HEK293 (cell line): ENCODE measurements at regions of chr12 and their contacts with region 1.

Region 1: DNA sequence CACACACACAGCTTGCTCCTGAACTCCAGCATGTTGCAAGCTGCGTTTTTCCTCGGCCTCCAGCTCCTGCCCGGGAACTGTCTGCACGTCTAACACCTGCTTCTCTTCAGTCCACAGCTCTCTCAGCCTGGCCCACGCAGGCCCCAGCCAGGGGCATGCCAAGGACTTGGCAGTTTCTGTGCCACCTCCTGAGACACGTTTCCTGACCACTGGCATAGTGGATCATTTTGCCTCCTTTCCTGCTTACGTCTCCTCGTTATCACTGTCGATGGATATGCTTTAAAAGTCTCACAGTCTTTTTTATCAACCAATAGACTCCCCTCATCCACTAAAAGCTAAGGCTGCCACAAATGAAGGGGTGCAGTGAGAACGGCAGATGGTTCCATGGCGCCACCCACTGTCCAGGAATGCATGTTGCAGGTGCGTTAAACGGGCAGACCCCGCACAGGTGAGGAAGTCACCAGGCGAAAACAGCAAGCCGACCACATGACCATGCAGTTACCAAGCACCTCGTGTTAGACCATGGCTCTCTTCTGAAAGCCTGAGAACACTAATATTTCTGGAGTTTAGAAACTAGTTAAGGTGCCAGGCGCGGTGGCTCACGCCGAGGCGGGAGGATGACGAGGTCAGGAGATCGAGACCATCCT is 14.7 kb upstream of the TEAD4 start:
- H3K4me3 ChIP-seq: no peak overlapping the region
- H3K27ac ChIP-seq: no peak overlapping the region
- H3K4me1 ChIP-seq: no peaks in the 10 kb centered on the region
- CTCF ChIP-seq: peak; percentile 67; the same call in 1 of the 2 replicates

Region 2: DNA sequence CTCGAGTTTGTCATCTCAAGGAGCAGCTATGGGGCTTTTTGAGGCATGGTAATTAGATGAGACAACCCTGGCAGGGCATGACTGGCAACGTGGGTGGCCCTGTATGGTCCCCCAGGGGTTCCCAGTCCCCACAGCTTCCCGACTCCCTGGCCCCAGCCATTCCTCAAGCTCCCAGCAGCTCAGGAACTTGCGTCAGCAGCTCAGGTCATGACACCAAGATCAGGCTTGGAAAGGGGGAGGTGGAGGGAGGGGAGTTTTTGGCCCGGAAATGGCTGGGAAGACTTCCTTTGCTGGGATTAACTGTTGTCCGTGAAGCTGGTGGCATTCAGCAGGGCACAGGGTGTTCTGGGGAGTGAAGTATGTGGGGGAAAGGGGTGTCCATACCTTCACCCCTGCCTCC is 99.2 kb before region 1 on chr12:
- CTCF ChIA-PET with region 1: interaction called, 15 read pairs
- POLR2A ChIA-PET with region 1: no interaction called
- H3K4me3 ChIP-seq: no peak overlapping the region
- H3K27ac ChIP-seq: no peak overlapping the region
- H3K4me1 ChIP-seq: no peaks in the 10 kb centered on the region
- CTCF ChIP-seq: no peak

Region 3: DNA sequence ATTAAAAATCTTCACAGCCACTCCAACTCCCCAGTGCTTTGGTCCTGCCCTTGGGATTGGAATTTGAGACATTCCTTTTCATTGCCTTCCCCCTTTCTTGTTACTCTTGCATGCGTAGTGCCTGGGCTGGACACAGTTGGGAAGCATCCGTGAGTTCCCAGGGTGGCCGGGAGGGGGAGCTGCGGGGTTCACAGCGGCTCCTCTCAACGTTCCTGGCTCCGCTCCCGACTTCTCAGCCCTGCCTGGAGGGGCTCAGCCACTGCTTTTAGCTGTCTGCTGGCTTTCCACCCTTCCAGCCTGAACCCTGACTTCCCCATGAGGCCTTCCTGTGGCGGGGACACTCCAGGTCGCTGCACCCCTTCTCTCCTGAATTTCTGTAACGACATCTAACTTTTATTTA is 90.9 kb before region 1 on chr12:
- CTCF ChIA-PET with region 1: interaction called, 20 read pairs
- POLR2A ChIA-PET with region 1: no interaction called
- H3K4me3 ChIP-seq: no peak overlapping the region
- H3K27ac ChIP-seq: no peak overlapping the region
- H3K4me1 ChIP-seq: no peaks in the 10 kb centered on the region
- CTCF ChIP-seq: peak; percentile 83

Region 4: DNA sequence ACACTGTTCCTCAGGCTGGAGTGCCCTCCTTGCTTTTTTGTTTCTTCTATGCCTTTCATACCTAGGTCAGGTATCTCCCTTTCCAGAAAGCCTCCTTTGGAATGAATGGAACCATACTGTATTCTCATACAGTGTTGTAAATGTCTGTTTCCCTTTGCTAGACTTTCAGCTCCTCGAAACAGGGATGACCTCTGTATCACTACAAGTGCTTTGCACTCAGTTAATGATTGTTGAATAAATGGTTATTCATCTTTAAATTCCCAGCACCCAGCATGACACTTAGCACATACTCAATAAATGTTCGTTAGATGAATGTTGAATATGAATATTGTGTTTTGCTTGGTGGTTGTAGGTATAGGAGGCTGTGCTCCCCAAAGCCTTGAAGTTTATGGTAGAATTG is 59.7 kb before region 1 on chr12:
- CTCF ChIA-PET with region 1: interaction called, 28 read pairs
- POLR2A ChIA-PET with region 1: interaction called, 7 read pairs
- H3K4me3 ChIP-seq: no peak overlapping the region
- H3K27ac ChIP-seq: no peak overlapping the region
- H3K4me1 ChIP-seq: no peaks in the 10 kb centered on the region
- CTCF ChIP-seq: no peak

Region 5: DNA sequence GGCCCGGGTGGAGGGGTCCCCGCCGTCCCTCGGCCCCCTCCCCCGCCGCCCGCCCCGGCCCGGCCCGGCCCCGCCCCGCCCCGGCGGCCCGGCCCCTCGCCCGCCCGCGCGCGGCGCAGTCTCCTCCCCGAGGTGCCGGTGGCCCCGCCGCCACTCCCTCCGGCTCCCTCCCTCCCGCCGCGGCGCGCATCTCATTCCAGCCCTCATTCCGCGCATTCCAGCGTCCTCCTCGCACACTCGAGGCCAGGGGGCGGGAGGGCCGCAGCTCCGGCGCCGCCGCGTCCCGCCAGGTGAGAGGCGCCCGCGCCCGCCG is 14.6 kb after region 1 on chr12 and contains the start of gene TEAD4:
- CTCF ChIA-PET with region 1: interaction called, 18 read pairs
- POLR2A ChIA-PET with region 1: interaction called, 4 read pairs
- H3K4me3 ChIP-seq: peak within 1 kb of the TSS; percentile 58
- H3K27ac ChIP-seq: peak within 1 kb of the TSS; percentile 93
- H3K4me1 ChIP-seq: peaks cover 7% of the 10 kb centered on the region; the same call in 1 of the 2 replicates
- CTCF ChIP-seq: no peak

Region 6: DNA sequence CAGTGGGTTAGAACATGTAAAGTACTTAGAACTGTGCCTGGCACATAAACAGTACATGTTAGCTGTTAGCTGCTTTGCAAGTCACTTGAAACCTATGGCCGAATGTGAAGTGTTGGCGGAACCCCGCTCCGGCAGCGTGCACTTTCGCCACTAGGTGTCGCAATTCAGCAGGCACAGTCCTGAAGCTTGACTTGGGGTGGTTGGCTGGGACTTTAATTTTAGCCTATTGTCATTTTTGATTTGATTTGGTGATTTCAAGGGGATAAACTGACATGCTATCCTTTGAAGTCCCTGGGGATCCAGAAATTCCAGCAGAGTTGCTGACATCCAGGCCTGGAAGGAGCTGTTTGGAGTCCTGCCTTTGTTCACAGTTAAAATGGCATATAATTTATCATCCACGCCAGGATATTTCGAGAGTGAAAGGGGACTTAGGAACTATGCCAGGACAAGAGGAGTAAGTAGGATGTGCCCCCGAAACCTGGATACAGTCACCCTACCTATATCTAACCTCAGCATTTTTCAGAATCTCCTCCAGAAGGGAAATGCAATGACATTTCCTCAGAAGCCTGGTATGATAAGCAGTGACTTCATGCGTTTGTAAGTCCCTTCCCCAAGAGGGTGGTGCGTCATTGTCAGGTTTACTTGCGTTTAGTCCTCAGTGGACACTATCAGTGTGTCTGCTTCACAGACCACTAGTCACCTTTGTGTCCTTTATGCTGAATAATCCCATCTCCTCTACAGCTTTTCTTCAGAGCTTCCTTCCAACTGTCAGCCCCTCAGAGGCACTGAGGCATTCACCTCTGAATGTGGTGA is 129.1 kb after region 1 on chr12:
- CTCF ChIA-PET with region 1: no interaction called
- POLR2A ChIA-PET with region 1: no interaction called
- H3K4me3 ChIP-seq: no peak overlapping the region
- H3K27ac ChIP-seq: no peak overlapping the region
- H3K4me1 ChIP-seq: peaks cover 2% of the 10 kb centered on the region; the same call in 1 of the 2 replicates
- CTCF ChIP-seq: peak; percentile 87